ENCODE measurements at regions of chr11 and their contacts with region 1.

Region 1: DNA sequence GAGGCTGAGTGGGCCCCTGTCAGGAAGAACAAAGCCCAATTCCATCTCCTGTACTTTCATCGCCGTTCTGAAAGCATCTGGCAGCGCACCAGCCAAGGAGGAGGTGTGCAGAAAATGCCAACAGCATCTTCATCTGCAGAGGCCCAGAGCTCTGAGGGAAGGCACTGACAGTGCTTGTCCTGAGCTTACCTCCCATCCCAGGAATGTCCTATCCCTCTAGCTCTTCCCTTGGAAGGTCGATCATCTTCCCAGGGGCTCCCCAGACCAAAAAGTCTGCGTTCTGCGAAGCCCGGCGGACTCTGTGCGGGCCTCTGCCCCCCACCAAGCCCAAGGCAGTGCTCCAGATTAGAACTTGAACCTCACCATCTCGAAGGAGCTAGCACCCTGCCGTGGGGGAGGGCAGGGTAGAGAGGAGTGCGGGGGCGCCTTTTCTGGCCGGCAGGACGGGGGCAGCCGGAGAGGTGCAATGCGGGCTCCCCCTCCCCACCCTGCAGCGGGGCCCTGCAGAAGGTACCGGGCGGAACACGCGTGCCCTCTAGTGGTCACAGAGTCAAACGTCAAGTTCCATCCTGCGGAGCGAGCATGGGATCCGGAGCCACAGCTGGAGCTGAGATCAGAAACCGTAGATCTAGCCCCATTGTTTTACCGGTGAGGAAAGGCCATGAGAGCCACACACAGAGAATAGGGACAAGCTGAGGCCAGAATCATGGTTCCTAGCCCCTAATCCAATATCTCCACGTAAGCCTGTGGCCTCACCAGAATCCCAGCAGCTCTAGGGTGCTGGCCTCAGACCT is 5.0 kb downstream of the SCN2B start:
- DNase-seq: peak; percentile 82 to 89
- H3K4me3 ChIP-seq: no peak overlapping the region
- H3K4me3 Mint-ChIP-seq: no peak overlapping the region
- H3K27ac Mint-ChIP-seq: no peak overlapping the region
- H3K4me1 ChIP-seq: peaks cover 3% of the 10 kb centered on the region; the same call in 1 of the 2 replicates
- H3K4me1 Mint-ChIP-seq: peaks cover 24% of the 10 kb centered on the region
- H3K27me3 ChIP-seq: no peaks in the 10 kb centered on the region; the same call in 1 of the 2 replicates
- H3K27me3 Mint-ChIP-seq: no peaks in the 10 kb centered on the region
- CTCF ChIP-seq: peak; percentile 98 to 99

Region 2: GRCh38 chr11:117970400-117971024 is 201.0 kb before region 1 on chr11:
- CTCF ChIA-PET with region 1: no interaction called
- POLR2A ChIA-PET with region 1: no interaction called
- intact Hi-C with region 1: no loop called
- DNase-seq: no peak
- H3K4me3 ChIP-seq: no peak overlapping the region
- H3K4me3 Mint-ChIP-seq: no peak overlapping the region
- H3K27ac Mint-ChIP-seq: no peak overlapping the region
- H3K4me1 ChIP-seq: no peaks in the 10 kb centered on the region
- H3K4me1 Mint-ChIP-seq: no peaks in the 10 kb centered on the region
- H3K27me3 ChIP-seq: no peaks in the 10 kb centered on the region
- H3K27me3 Mint-ChIP-seq: peaks cover 4% of the 10 kb centered on the region
- CTCF ChIP-seq: no peak

Region 3: DNA sequence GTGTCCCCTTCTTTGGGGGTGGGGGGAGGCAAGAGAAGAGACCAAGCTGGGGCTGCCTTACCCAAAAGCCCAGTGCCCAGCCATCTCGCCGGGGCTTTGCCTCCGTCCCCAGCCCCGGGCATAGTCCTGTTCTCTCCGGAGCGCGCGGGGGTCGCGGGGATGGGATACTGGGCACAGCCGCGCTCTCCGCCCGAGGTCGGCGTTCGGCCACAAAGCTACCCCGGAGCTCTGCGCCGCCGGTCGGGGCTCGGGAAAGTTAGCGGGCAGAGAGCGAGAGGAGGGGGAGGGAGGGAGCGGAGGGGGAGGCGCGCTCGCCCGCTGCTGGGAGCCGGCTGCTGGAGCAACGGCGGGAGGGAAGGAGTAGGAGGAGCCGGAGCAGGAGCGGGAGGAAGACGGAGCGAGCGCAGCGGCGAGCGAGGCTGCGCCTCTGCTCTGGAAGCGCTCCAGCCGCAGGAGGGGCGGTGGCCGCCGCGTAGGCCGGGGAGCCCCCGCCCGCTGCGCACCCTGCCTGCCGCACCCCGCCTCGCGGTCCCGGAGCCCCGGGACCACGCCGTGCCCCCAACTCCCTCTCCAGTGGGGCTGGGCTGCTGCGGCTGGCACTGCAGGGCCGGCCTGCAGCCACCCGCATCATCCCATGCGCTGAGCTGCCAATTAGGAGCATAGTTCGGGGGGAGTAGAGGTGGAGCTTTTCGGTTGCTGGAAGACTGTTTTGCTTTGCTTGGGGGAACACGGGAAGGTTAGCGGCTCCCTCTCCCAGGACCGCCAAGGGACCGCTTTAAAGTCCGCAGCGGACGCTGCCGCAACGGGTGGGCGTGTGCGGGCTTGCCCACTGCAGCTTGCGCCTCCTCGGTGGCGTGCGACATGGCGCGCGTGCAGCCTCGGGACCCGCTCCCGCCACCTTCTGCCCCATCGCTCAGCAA is 18.7 kb before region 1 on chr11 and contains the start of gene SCN4B:
- CTCF ChIA-PET with region 1: interaction called, 37 read pairs
- POLR2A ChIA-PET with region 1: no interaction called
- intact Hi-C with region 1: no loop called
- DNase-seq: peak; percentile 71 to 78
- H3K4me3 ChIP-seq: peak within 1 kb of the TSS; percentile 37
- H3K4me3 Mint-ChIP-seq: peak within 1 kb of the TSS; percentile 66
- H3K27ac Mint-ChIP-seq: no peak within 1 kb of the TSS
- H3K4me1 ChIP-seq: 0 out of 2 replicates have a peak, but pooled peaks cover 10% of the 10 kb centered on the region
- H3K4me1 Mint-ChIP-seq: no peaks in the 10 kb centered on the region
- H3K27me3 ChIP-seq: peaks cover 5% of the 10 kb centered on the region
- H3K27me3 Mint-ChIP-seq: peaks cover 33% of the 10 kb centered on the region
- CTCF ChIP-seq: no peak
- total RNA-seq, gene SCN4B: 0.70 TPM in 2 replicates

Region 4: GRCh38 chr11:118290923-118291322 is 119.5 kb after region 1 on chr11:
- CTCF ChIA-PET with region 1: interaction called, 5 read pairs
- POLR2A ChIA-PET with region 1: no interaction called
- intact Hi-C with region 1: loop called (anchors 1 kb)
- DNase-seq: peak; percentile 80 to 82
- H3K4me3 ChIP-seq: no peak overlapping the region
- H3K4me3 Mint-ChIP-seq: no peak overlapping the region
- H3K27ac Mint-ChIP-seq: no peak overlapping the region
- H3K4me1 ChIP-seq: peaks cover 9% of the 10 kb centered on the region
- H3K4me1 Mint-ChIP-seq: peaks cover 24% of the 10 kb centered on the region
- H3K27me3 ChIP-seq: no peaks in the 10 kb centered on the region
- H3K27me3 Mint-ChIP-seq: no peaks in the 10 kb centered on the region
- CTCF ChIP-seq: peak; percentile 61 to 70

Measured in Caco-2 (cell line).